ENCODE measurements at regions of chr6 and their contacts with region 1.

Region 1: GRCh38 chr6:150891888-150892485 is 26.5 kb downstream of the MTHFD1L start:
- DNase-seq: peak; percentile 49 to 81 (median 56)
- ATAC-seq: peak; percentile 90
- H3K4me3 ChIP-seq: no peak overlapping the region
- H3K27ac ChIP-seq: no peak overlapping the region
- H3K4me1 ChIP-seq: peaks cover 5 to 11% of the 10 kb centered on the region in 2 experiments; a peak in 3 of 5 replicates
- H3K27me3 ChIP-seq: no peaks in the 10 kb centered on the region
- CTCF ChIP-seq: peak; percentile 81 to 94 (median 89)
- EP300 ChIP-seq: no peak
- POLR2A ChIP-seq: 0 out of 2 replicates have a peak, but pooled peaks have one; percentile 22
- RAD21 ChIP-seq: peak; percentile 87 to 89

Region 2: DNA sequence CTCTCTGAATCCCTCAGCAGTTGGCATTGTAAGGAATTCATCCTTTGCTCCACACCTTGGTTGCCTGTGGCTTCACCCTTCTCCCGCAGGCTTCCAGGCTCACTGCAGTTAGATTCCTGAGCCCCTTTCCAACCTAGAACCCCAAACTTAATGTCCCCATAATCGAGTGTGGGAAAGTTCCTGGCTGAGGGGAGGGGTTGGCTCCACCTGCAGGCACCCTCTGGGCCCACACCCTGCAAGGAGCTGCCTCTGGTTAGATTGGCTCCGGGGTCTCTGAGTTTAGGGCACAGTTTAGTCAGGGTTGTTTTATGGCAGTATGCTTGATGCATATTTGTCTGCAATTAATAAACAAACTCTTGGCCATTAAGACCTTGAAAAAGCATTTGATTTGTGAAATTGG is 36.9 kb after region 1 on chr6:
- CTCF ChIA-PET with region 1: interaction called, 12 read pairs
- POLR2A ChIA-PET with region 1: interaction called, 3 read pairs
- in situ Hi-C with region 1: no loop called
- intact Hi-C with region 1: no loop called
- DNase-seq: peak in 2 of 4 experiments; percentile 9 to 35
- ATAC-seq: peak; percentile 85
- H3K4me3 ChIP-seq: no peak overlapping the region
- H3K27ac ChIP-seq: no peak overlapping the region
- H3K4me1 ChIP-seq: no peaks in the 10 kb centered on the region
- H3K27me3 ChIP-seq: no peaks in the 10 kb centered on the region
- CTCF ChIP-seq: peak; percentile 43 to 55 (median 48)
- EP300 ChIP-seq: no peak
- POLR2A ChIP-seq: no peak
- RAD21 ChIP-seq: peak in 1 of 2 experiments; percentile 14; a peak in 1 of 4 replicates

Region 3: GRCh38 chr6:151323791-151324487 is 432.0 kb after region 1 on chr6:
- CTCF ChIA-PET with region 1: interaction called, 38 read pairs
- POLR2A ChIA-PET with region 1: interaction called, 3 read pairs
- in situ Hi-C with region 1: loop called (anchors 5 kb)
- intact Hi-C with region 1: loop called (anchors 1 kb)
- DNase-seq: peak; percentile 73 to 85 (median 82)
- ATAC-seq: peak; percentile 95
- H3K4me3 ChIP-seq: no peak overlapping the region
- H3K27ac ChIP-seq: no peak overlapping the region
- H3K4me1 ChIP-seq: peaks cover 0 to 6% of the 10 kb centered on the region in 2 experiments; a peak in 2 of 5 replicates
- H3K27me3 ChIP-seq: peaks cover 37 to 51% of the 10 kb centered on the region in 2 experiments
- CTCF ChIP-seq: peak; percentile 91 to 98 (median 96)
- EP300 ChIP-seq: no peak
- POLR2A ChIP-seq: no peak
- RAD21 ChIP-seq: peak; percentile 94 to 98

Region 4: GRCh38 chr6:151330134-151330696 is 438.2 kb after region 1 on chr6:
- CTCF ChIA-PET with region 1: interaction called, 38 read pairs
- POLR2A ChIA-PET with region 1: interaction called, 6 read pairs
- in situ Hi-C with region 1: loop called (anchors 5 kb)
- intact Hi-C with region 1: loop called (anchors 2 kb)
- DNase-seq: no peak
- ATAC-seq: no peak
- H3K4me3 ChIP-seq: no peak overlapping the region
- H3K27ac ChIP-seq: no peak overlapping the region
- H3K4me1 ChIP-seq: peaks cover 0 to 9% of the 10 kb centered on the region in 2 experiments; a peak in 1 of 5 replicates
- H3K27me3 ChIP-seq: peaks cover 49 to 51% of the 10 kb centered on the region in 2 experiments
- CTCF ChIP-seq: no peak
- EP300 ChIP-seq: no peak
- POLR2A ChIP-seq: no peak
- RAD21 ChIP-seq: no peak

Region 5: GRCh38 chr6:151339369-151339768 is 447.4 kb after region 1 on chr6:
- CTCF ChIA-PET with region 1: interaction called, 18 read pairs
- POLR2A ChIA-PET with region 1: interaction called, 6 read pairs
- in situ Hi-C with region 1: no loop called
- intact Hi-C with region 1: loop called (anchors 2 kb)
- DNase-seq: peak in 1 of 4 experiments; percentile 36
- ATAC-seq: no peak; the same call in 1 of the 3 replicates
- H3K4me3 ChIP-seq: no peak overlapping the region
- H3K27ac ChIP-seq: no peak overlapping the region
- H3K4me1 ChIP-seq: peaks cover 0 to 12% of the 10 kb centered on the region in 2 experiments; a peak in 1 of 5 replicates
- H3K27me3 ChIP-seq: peaks cover 38 to 59% of the 10 kb centered on the region in 2 experiments
- CTCF ChIP-seq: no peak
- EP300 ChIP-seq: no peak
- POLR2A ChIP-seq: no peak
- RAD21 ChIP-seq: no peak